Posterior cingulate gyrus (tissue), 11 donors: ENCODE measurements at regions of chr14 and their contacts with region 1.

Region 1: GRCh38 chr14:51314321-51315015 is 74.4 kb downstream of the TMX1 start:
- DNase-seq: no peak

Region 2: DNA sequence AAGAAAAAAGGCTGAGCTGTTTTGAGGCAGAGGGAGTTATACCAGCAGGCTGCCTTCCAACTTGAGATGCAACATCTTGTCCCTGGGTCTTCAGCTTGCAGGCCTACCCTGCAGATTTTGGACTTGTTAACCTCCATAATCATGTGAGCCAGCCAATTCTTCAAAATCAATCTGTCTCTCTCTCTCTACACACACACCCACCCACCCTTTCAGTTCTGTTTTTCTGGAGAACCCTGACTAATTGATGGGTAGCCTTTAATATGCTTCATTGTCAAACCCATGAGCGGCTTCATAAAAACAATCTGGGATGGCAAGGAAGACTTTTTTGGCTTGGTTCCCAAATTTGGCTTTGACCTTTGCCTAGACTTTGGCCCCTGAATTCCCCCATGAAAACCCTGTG is 39.4 kb after region 1 on chr14:
- intact Hi-C with region 1: loop called (anchors 1 kb)
- DNase-seq: no peak

Region 3: GRCh38 chr14:51419685-51420084 is 105.2 kb after region 1 on chr14:
- intact Hi-C with region 1: no loop called
- DNase-seq: no peak